Posterior vena cava (tissue), 2 donors: ENCODE measurements at regions of chr2 and their contacts with region 1.

Region 1: GRCh38 chr2:64865073-64865830 is 123.9 kb upstream of the SLC1A4 start:
- DNase-seq: peak; percentile 91

Region 2: GRCh38 chr2:64348386-64349130 is 516.7 kb before region 1 on chr2:
- intact Hi-C with region 1: loop called in 1 of 2 experiments (anchors 10 kb)
- DNase-seq: no peak

Region 3: GRCh38 chr2:64586883-64587481 is 278.3 kb before region 1 on chr2:
- intact Hi-C with region 1: loop called (anchors 5 kb)
- DNase-seq: no peak

Region 4: DNA sequence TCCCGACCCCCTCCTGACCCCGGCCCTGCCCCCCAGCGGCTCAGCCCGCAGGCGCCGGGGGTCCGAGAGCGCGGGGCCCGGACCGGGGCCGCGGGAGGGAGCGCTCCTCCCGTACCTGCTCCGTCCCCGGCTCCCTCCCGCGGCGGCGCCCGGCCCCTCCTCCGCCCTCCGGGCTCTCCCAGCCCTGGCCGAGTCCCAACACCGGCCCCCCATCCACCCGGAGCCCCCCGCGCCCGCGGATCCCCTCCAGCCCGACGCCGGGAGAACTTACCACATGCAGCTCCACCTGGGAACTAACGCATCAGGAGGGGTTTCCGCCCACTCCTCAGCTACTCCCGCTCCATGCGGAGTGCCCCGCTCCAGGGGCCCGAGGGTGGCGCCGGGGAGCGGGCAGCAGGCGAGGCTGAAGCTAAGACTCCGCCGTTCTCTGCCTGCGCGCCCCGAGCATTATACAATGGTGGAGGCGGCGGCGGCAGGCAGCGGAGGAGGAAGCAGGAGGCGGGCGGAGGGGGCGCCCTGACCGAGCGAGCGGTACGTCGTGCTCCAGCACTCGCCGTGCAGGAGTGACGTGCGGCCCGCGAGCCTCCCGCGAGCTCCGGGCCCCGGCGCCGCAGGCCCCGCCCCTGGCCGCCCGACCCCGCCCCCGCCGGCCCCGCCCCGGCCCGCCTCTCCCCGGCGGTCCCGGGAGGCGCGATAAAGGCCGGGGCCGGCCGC is 211.7 kb before region 1 on chr2 and contains the start of gene SERTAD2:
- intact Hi-C with region 1: loop called in 1 of 2 experiments (anchors 2 kb)
- DNase-seq: peak; percentile 97
- total RNA-seq, gene SERTAD2: 17.3 to 21.8 TPM

Region 5: GRCh38 chr2:64767670-64768468 is 97.4 kb before region 1 on chr2:
- intact Hi-C with region 1: loop called in 1 of 2 experiments (anchors 10 kb)
- DNase-seq: peak; percentile 96

Region 6: DNA sequence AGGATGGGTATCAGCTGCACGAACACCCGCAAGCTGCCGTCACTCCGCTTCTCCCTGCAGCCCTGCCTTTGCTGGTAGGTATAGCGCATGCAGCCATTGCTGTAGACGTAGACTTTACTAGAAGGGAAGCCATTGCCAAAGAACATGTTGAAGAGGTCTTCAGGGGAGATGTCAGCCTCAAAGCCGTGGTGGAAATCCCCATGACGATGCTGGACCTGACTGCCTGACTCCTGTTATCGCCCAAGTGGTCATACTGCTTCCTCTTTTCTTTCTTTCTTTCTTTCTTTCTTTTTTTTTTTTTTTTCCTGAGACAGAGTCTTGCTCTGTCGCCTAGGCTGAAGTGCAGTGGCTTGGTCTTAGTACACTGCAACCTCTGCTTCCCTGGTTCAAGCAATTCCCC is 635.8 kb after region 1 on chr2:
- intact Hi-C with region 1: no loop called
- DNase-seq: no peak

Region 7: GRCh38 chr2:66445925-66446860 is 1580.9 kb after region 1 on chr2:
- intact Hi-C with region 1: no loop called
- DNase-seq: peak; percentile 87